ENCODE measurements at regions of chr11 and their contacts with region 1.

Region 1: GRCh38 chr11:15969281-15969680 is 387.1 kb downstream of the SOX6 start:
- DNase-seq: peak; percentile 56
- H3K4me3 Mint-ChIP-seq: peak overlapping the region; percentile 58
- H3K27ac Mint-ChIP-seq: peak overlapping the region; percentile 93
- H3K4me1 Mint-ChIP-seq: peaks cover 72% of the 10 kb centered on the region
- H3K27me3 Mint-ChIP-seq: no peaks in the 10 kb centered on the region
- CTCF ChIP-seq: no peak

Region 2: GRCh38 chr11:15852179-15852578 is 117.1 kb before region 1 on chr11:
- CTCF ChIA-PET with region 1: no interaction called
- intact Hi-C with region 1: loop called (anchors 10 kb)
- DNase-seq: peak; percentile 42
- H3K4me3 Mint-ChIP-seq: no peak overlapping the region
- H3K27ac Mint-ChIP-seq: no peak overlapping the region
- H3K4me1 Mint-ChIP-seq: no peaks in the 10 kb centered on the region
- H3K27me3 Mint-ChIP-seq: no peaks in the 10 kb centered on the region
- CTCF ChIP-seq: peak; percentile 45

Measured in Calu3 (cell line).